Activated naive CD4-positive, alpha-beta T cell treated with anti-CD3 and anti-CD28 coated beads, Interleukin-2, amount 10 ng/mL, durations not matched to agents 7 days and 5 days (primary cell): ENCODE measurements at regions of chr12 and their contacts with region 1.

Region 1: GRCh38 chr12:89019408-89020120 is 332.7 kb downstream of the DUSP6 start:
- DNase-seq: peak; percentile 86
- H3K4me3 Mint-ChIP-seq: no peak overlapping the region
- H3K27ac Mint-ChIP-seq: no peak overlapping the region
- H3K4me1 Mint-ChIP-seq: peaks cover 29% of the 10 kb centered on the region
- H3K27me3 Mint-ChIP-seq: peaks cover 4% of the 10 kb centered on the region

Region 2: GRCh38 chr12:89033062-89033461 is 13.5 kb after region 1 on chr12:
- CTCF ChIA-PET with region 1: interaction called, 58 read pairs
- DNase-seq: no peak
- H3K4me3 Mint-ChIP-seq: no peak overlapping the region
- H3K27ac Mint-ChIP-seq: no peak overlapping the region
- H3K4me1 Mint-ChIP-seq: peaks cover 42% of the 10 kb centered on the region
- H3K27me3 Mint-ChIP-seq: peaks cover 4% of the 10 kb centered on the region

Region 3: GRCh38 chr12:89051065-89051677 is 31.6 kb after region 1 on chr12:
- CTCF ChIA-PET with region 1: interaction called, 10 read pairs
- DNase-seq: peak; percentile 24
- H3K4me3 Mint-ChIP-seq: no peak overlapping the region
- H3K27ac Mint-ChIP-seq: no peak overlapping the region
- H3K4me1 Mint-ChIP-seq: peaks cover 22% of the 10 kb centered on the region
- H3K27me3 Mint-ChIP-seq: no peaks in the 10 kb centered on the region

Region 4: GRCh38 chr12:89084751-89085150 is 65.2 kb after region 1 on chr12:
- CTCF ChIA-PET with region 1: no interaction called
- DNase-seq: no peak
- H3K4me3 Mint-ChIP-seq: no peak overlapping the region
- H3K27ac Mint-ChIP-seq: no peak overlapping the region
- H3K4me1 Mint-ChIP-seq: peaks cover 16% of the 10 kb centered on the region
- H3K27me3 Mint-ChIP-seq: peaks cover 5% of the 10 kb centered on the region

Region 5: GRCh38 chr12:89345830-89346740 is 326.5 kb after region 1 on chr12:
- CTCF ChIA-PET with region 1: interaction called, 16 read pairs
- DNase-seq: peak; percentile 55
- H3K4me3 Mint-ChIP-seq: peak overlapping the region; percentile 66
- H3K27ac Mint-ChIP-seq: peak overlapping the region; percentile 89
- H3K4me1 Mint-ChIP-seq: peaks cover 62% of the 10 kb centered on the region
- H3K27me3 Mint-ChIP-seq: peaks cover 4% of the 10 kb centered on the region

Region 6: GRCh38 chr12:89461649-89462612 is 442.4 kb after region 1 on chr12:
- CTCF ChIA-PET with region 1: interaction called, 123 read pairs
- DNase-seq: no peak
- H3K4me3 Mint-ChIP-seq: peak overlapping the region; percentile 53
- H3K27ac Mint-ChIP-seq: peak overlapping the region; percentile 43
- H3K4me1 Mint-ChIP-seq: peaks cover 47% of the 10 kb centered on the region
- H3K27me3 Mint-ChIP-seq: no peaks in the 10 kb centered on the region

Region 7: DNA sequence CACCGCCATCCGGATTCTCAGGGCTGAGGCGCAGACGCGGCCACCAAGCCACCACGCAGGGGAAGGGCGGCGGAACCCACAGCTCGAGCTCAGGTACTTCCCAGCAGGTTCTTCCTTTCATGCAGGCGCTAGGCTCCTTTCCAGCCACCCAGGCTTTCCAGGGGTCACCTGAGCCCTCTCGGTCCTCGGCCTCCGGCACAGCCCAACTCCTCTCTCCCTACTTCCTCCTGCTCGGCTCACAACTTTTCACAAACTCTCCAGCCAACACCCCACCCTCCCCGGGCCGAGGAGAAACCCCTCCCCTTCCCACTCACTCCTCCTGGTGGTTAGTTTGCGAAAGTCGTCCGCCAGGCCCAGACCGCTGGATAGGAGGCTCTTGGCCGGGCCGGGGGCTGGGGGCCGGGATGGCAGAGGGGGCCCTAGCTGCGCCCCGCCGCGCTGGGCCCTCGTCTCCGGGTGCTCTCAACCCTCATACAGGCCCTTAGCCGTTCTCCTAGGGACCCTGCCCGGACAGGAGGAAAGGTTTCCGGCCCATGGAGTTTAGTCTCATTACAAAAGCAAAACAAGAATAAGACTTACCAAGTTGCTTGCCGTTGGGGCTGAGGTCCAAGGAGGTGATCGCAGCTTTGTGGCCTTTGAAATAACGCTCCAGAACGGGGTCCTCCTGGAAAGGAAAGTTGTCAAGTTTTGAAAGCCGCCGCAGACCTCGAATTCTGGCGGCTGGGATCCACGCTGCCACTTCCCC is 505.1 kb after region 1 on chr12 and contains the start of gene GALNT4:
- CTCF ChIA-PET with region 1: interaction called, 100 read pairs
- DNase-seq: peak; percentile 86
- H3K4me3 Mint-ChIP-seq: peak within 1 kb of the TSS; percentile 95
- H3K27ac Mint-ChIP-seq: peak within 1 kb of the TSS; percentile 92
- H3K4me1 Mint-ChIP-seq: peaks cover 68% of the 10 kb centered on the region
- H3K27me3 Mint-ChIP-seq: no peaks in the 10 kb centered on the region